Naive thymus-derived CD4-positive, alpha-beta T cell (primary cell): ENCODE measurements at regions of chr2 and their contacts with region 1.

Region 1: GRCh38 chr2:230847883-230848388 is 16.8 kb upstream of the ITM2C start:
- DNase-seq: peak; percentile 53 to 90 (median 75)
- ATAC-seq: peak; percentile 94
- H3K4me3 ChIP-seq: no peak overlapping the region
- H3K4me3 Mint-ChIP-seq: peak overlapping the region in 3 of 10 donors; percentile 18 to 68 (median 37)
- H3K27ac ChIP-seq: no peak overlapping the region
- H3K27ac Mint-ChIP-seq: peak overlapping the region in 1 of 9 donors; percentile 18
- H3K4me1 ChIP-seq: peaks cover 0 to 3% of the 10 kb centered on the region in 2 donors
- H3K4me1 Mint-ChIP-seq: peaks cover 3 to 12% (median 6%) of the 10 kb centered on the region in 7 donors
- H3K27me3 ChIP-seq: no peaks in the 10 kb centered on the region
- H3K27me3 Mint-ChIP-seq: peaks cover 10 to 58% (median 32%) of the 10 kb centered on the region in 5 donors

Region 2: DNA sequence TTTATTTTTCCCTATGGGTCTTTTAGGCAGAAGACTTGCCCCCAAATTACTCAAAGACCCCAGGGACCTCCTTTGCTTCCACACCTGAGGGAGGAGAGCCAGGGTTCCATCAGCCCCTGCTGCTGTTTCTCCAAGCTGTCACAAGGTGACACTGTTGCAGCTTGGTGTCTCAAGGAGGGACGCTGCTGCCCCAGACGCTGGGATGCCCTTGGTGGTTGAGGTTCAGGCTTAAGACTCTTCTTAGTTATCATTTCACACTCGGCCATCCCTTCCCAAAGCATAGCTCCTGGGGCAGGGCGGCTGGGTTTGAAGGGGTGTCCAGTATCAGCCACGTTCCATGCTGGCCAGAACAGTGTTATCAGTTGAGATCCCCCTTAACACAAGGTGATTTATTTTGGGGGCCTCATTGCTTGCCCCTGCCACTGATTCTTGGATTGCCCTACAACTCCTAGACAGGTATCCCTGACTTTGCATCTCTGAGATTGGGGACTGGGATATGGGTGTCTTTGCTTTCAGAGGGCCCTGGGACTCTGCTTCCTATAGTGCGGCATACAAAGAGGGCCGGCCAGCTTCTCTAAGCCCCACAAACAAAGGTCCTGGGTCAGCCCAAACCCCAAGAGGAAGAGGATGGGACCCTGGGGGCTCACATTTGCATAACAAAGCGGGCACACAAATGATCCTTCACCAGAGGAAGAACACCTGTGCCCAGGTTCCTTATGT is 54.4 kb after region 1 on chr2:
- CTCF ChIA-PET with region 1: interaction called, 3 read pairs
- POLR2A ChIA-PET with region 1: no interaction called
- intact Hi-C with region 1: loop called in 1 of 2 experiments (anchors 2 kb)
- DNase-seq: peak in 4 of 9 donors; percentile 22 to 49 (median 32)
- ATAC-seq: peak; percentile 71
- H3K4me3 ChIP-seq: no peak overlapping the region
- H3K4me3 Mint-ChIP-seq: no peak overlapping the region
- H3K27ac ChIP-seq: no peak overlapping the region
- H3K27ac Mint-ChIP-seq: peak overlapping the region in 1 of 9 donors; percentile 21
- H3K4me1 ChIP-seq: peaks cover 6 to 13% of the 10 kb centered on the region in 2 donors
- H3K4me1 Mint-ChIP-seq: peaks cover 2 to 25% (median 23%) of the 10 kb centered on the region in 7 donors
- H3K27me3 ChIP-seq: no peaks in the 10 kb centered on the region
- H3K27me3 Mint-ChIP-seq: peaks cover 0 to 46% (median 6%) of the 10 kb centered on the region in 5 donors

Region 3: DNA sequence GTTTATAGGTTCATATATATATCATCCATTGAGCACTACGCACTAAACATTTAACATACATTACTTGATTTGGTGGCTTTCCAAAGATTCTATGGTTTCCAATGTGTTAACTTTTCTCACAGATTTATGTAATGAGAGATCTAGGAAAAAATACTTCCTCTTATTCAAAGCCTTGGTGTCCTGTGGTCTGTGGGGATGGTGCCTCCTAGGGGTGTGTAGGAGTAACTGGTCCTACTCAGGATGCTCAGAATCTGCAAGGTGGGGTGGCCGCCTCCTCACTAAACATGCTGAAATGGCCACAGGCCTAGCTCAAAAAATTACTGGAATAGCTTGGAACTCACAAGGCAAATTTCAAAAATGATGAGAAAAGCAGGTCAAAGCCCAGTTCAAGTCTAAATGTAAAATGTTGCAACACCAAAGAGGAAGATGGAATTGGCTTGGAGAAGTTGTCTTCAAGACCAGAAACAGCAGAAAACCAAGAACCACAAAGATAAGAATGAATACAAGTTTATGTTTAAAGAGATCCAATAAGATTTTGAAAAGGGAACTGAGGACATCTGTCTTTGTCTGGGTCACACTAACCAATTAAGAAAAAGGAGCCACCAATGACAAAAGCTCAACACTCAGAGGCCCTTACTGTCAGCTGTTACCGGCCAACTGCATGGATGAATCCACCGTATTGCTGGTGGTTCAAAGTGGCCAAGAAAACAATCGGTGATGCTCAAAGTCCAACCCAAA is 65.6 kb after region 1 on chr2:
- CTCF ChIA-PET with region 1: interaction called, 4 read pairs
- POLR2A ChIA-PET with region 1: no interaction called
- intact Hi-C with region 1: loop called in 1 of 2 experiments (anchors 1 kb)
- DNase-seq: peak in 4 of 9 donors; percentile 22 to 36 (median 29)
- ATAC-seq: peak; percentile 78
- H3K4me3 ChIP-seq: no peak overlapping the region
- H3K4me3 Mint-ChIP-seq: no peak overlapping the region
- H3K27ac ChIP-seq: no peak overlapping the region
- H3K27ac Mint-ChIP-seq: peak overlapping the region in 1 of 9 donors; percentile 7
- H3K4me1 ChIP-seq: no peaks in the 10 kb centered on the region
- H3K4me1 Mint-ChIP-seq: peaks cover 0 to 27% (median 15%) of the 10 kb centered on the region in 7 donors
- H3K27me3 ChIP-seq: no peaks in the 10 kb centered on the region
- H3K27me3 Mint-ChIP-seq: peaks cover 0 to 56% (median 3%) of the 10 kb centered on the region in 5 donors

Region 4: GRCh38 chr2:230987137-230988020 is 139.4 kb after region 1 on chr2:
- CTCF ChIA-PET with region 1: interaction called, 20 read pairs
- POLR2A ChIA-PET with region 1: interaction called, 4 read pairs
- intact Hi-C with region 1: loop called (anchors 1 kb)
- DNase-seq: peak; percentile 54 to 86 (median 68)
- ATAC-seq: peak; percentile 87
- H3K4me3 ChIP-seq: peak overlapping the region; percentile 59
- H3K4me3 Mint-ChIP-seq: peak overlapping the region; percentile 19 to 68 (median 47)
- H3K27ac ChIP-seq: no peak overlapping the region
- H3K27ac Mint-ChIP-seq: peak overlapping the region in 1 of 9 donors; percentile 40
- H3K4me1 ChIP-seq: peaks cover 4 to 11% of the 10 kb centered on the region in 2 donors
- H3K4me1 Mint-ChIP-seq: peaks cover 0 to 34% (median 3%) of the 10 kb centered on the region in 7 donors
- H3K27me3 ChIP-seq: no peaks in the 10 kb centered on the region
- H3K27me3 Mint-ChIP-seq: peaks cover 6 to 37% (median 13%) of the 10 kb centered on the region in 5 donors